Activated CD8-positive, alpha-beta memory T cell treated with anti-CD3 and anti-CD28 coated beads, Interleukin-2, amount 10 ng/mL, durations not matched to agents 7 days and 5 days (primary cell): ENCODE measurements at regions of chr15 and their contacts with region 1.

Region 1: DNA sequence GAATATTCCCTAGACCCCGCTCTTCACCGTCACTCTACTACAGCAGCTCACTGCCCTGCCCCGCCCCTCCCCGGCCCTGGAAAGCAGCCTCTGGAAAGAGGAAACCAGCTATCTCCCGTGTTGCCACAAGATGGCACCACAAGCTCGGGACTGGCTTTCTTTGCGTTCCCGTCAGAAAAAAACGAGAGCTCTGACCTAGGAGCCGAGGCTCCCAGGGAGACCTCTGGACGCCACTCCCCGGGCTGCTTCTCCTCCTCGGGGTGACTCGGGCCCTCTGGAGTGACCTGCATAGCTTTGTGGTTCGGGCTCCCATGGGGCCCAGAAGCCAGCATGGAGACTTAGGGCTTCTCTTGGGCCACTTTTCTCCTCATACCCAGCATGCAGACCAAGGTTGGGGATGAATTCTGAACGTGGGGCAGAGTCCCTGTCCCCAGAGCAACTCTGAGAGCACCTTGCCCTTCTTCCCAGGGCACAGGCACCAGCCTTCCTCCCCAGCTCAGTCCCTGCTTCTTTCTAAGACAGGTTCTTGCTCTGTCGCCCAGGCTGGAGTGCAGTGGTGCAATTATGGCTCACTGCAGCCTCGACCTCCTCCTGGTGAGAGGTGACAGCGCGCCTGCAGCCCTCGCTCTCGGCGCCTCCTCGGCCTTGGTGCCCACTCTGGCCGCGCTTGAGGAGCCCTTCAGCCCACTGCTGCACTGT is 19.0 kb downstream of the STOML1 start:
- DNase-seq: peak; percentile 88
- ATAC-seq: peak; percentile 89
- H3K4me3 Mint-ChIP-seq: no peak overlapping the region
- H3K27ac Mint-ChIP-seq: no peak overlapping the region
- H3K4me1 Mint-ChIP-seq: peaks cover 38% of the 10 kb centered on the region
- H3K27me3 Mint-ChIP-seq: peaks cover 36% of the 10 kb centered on the region

Region 2: GRCh38 chr15:73908030-73908821 is 64.9 kb before region 1 on chr15:
- CTCF ChIA-PET with region 1: no interaction called
- DNase-seq: peak; percentile 86
- ATAC-seq: peak; percentile 98
- H3K4me3 Mint-ChIP-seq: no peak overlapping the region
- H3K27ac Mint-ChIP-seq: no peak overlapping the region
- H3K4me1 Mint-ChIP-seq: peaks cover 27% of the 10 kb centered on the region
- H3K27me3 Mint-ChIP-seq: no peaks in the 10 kb centered on the region

Region 3: GRCh38 chr15:73956739-73957051 is 16.4 kb before region 1 on chr15:
- CTCF ChIA-PET with region 1: interaction called, 175 read pairs
- DNase-seq: no peak
- ATAC-seq: no peak
- H3K4me3 Mint-ChIP-seq: no peak overlapping the region
- H3K27ac Mint-ChIP-seq: no peak overlapping the region
- H3K4me1 Mint-ChIP-seq: peaks cover 39% of the 10 kb centered on the region
- H3K27me3 Mint-ChIP-seq: peaks cover 3% of the 10 kb centered on the region

Region 4: GRCh38 chr15:74007820-74008371 is 34.8 kb after region 1 on chr15:
- CTCF ChIA-PET with region 1: interaction called, 16 read pairs
- DNase-seq: peak; percentile 62
- ATAC-seq: peak; percentile 70
- H3K4me3 Mint-ChIP-seq: peak overlapping the region; percentile 15
- H3K27ac Mint-ChIP-seq: peak overlapping the region; percentile 83
- H3K4me1 Mint-ChIP-seq: peaks cover 58% of the 10 kb centered on the region
- H3K27me3 Mint-ChIP-seq: no peaks in the 10 kb centered on the region